Thyroid gland (tissue), 4 donors: ENCODE measurements at regions of chr6 and their contacts with region 1.

Region 1: GRCh38 chr6:41779793-41780545 is at the start of gene FRS3:
- DNase-seq: peak; percentile 98 to 99
- H3K4me3 ChIP-seq: peak within 1 kb of the TSS in 2 of 3 donors; percentile 30 to 66
- H3K27ac ChIP-seq: peak within 1 kb of the TSS; percentile 83 to 86 (median 85)
- H3K4me1 ChIP-seq: peaks cover 20% of the 10 kb centered on the region in 2 donors
- H3K27me3 ChIP-seq: no peaks in the 10 kb centered on the region
- CTCF ChIP-seq: peak; percentile 70 to 99 (median 96)
- POLR2A ChIP-seq: peak in 1 of 2 donors; percentile 59
- total RNA-seq, gene FRS3: 4.0 to 6.7 (median 5.8) TPM

Region 2: DNA sequence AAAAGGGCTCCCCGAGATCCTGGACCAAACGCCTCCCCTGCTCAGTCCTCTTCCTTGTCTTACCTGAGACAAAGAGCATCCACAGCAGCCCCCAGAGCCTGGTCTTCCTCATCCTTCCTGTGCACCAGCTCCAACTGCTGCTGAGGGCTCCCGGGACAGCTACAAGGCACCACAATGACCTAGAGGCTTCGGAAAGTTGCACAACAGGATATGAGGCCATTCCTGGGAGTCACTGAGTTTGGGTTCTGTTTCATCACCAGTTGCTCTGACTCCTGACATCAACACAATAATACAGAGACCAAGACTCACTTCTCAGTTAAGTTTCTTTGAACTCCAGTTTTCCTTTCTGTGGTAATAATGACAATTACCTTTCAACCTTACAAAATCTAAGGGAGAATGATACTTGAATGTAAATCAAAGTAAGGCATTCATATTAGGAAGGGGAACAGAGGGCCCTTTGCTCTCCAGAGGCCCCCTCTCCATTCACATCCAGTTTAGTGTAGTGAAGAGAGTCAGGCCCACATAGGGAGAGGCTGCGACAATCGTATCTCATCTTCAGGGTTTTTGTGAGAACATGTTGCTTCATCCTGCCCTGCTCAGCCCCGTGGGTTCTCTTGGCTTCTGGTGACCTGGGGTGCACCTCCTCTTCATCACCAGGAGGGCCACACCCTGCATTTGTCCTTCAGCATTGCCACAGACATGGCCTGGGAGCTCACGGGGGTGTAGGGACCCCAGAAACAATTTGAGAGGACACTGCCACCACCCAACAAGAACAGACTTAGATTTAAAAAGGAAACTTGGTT is 493.2 kb before region 1 on chr6 and contains the start of gene TREM1:
- intact Hi-C with region 1: no loop called
- DNase-seq: no peak
- H3K4me3 ChIP-seq: no peak within 1 kb of the TSS
- H3K27ac ChIP-seq: peak within 1 kb of the TSS in 2 of 3 donors; percentile 54 to 88
- H3K4me1 ChIP-seq: peaks cover 27 to 56% of the 10 kb centered on the region in 2 donors
- H3K27me3 ChIP-seq: no peaks in the 10 kb centered on the region
- CTCF ChIP-seq: no peak
- POLR2A ChIP-seq: no peak
- total RNA-seq, gene TREM1: 0.63 to 4.5 (median 1.0) TPM in 3 of 4 donors, not detected in the other

Region 3: DNA sequence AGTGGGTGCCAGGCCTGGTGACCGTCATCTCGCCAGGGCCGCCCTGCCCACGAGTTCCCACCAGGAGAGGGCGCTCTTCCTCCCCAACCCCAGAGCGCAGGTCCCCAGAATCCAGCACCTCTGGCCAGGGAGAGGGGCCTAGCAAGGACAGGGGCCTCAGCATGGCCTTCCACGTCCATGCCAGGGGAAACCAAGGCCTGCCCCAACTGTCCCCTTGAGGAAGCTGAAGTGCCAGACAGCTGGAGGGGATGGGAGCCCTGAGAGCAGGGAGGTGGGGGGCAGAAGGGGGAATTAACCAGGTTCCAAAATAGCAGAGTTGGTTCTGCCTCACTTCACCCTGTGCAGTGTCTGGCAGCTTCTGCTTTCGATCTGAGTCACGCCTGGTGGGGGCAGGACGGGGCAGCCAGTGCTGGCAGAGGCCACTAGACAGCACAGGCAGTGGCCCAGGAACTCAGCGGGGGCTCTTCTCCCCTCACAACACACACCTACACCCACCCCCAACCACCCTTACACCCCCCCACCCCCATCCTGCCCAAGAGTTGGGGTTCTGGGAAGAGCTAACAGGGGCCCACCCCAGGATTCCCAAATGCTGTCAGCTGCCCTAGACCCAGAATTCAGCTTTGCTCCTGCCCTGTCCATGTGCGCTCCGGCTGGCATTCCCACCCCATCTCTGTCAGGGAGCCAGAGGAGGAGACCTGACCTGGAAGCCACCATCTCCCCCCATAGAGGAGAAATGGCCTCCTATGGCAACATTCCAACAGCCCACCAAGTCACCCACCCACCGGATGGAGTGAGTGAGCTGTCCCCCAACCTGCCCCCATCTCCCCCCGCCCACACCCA is 73.8 kb before region 1 on chr6:
- intact Hi-C with region 1: loop called (anchors 10 kb)
- DNase-seq: peak; percentile 92 to 94
- H3K4me3 ChIP-seq: no peak overlapping the region
- H3K27ac ChIP-seq: peak overlapping the region; percentile 89 to 95 (median 94)
- H3K4me1 ChIP-seq: peaks cover 43 to 77% of the 10 kb centered on the region in 2 donors
- H3K27me3 ChIP-seq: no peaks in the 10 kb centered on the region
- CTCF ChIP-seq: peak; percentile 45 to 93 (median 86)
- POLR2A ChIP-seq: peak in 1 of 2 donors; percentile 20

Region 4: DNA sequence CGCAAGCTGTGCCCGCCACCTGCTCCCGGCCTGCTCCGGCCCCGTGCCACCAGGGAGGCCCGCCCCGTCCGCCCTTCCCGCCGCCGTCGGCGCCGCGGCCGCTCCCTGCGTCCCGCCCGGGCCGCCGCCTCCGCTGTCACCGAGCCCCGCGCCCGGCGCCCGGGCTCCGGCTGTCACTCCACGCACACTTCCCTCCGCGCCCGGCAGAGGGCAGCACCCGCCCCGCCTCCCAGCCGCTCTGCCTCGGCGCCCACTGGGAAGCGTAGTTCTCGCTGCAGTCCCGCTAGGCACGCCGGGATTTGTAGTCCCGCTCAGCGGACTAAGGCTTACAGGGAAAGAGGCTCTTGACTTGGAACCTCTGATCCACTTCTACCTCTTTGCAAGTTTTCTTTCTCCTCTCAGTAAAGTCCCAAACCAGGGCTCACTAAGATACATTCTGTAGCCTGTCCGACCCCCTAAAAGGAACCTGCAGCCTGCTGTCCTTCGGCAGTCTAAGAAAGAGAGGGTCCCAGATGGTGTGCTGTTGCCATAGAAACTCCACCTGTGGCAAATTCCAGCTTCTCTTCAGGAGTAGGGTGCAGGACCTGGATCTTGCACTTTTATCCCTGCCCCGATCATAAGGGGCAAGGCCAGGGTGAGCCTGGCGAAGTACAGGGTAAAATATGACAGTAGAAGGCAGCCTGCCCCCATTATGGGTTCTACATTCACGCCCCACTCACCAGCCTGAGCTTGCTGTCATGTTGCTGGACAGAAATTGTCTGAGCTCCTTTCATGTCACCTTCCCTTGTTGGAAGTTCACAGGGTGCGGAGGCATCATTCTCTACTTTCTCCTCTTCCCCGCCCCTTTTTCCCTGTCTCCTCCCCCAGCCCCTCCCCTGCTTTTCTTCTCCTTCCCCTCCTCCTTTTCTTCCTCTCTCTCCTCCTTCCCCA is 44.3 kb before region 1 on chr6 and contains the start of gene TFEB:
- intact Hi-C with region 1: loop called (anchors 5 kb)
- DNase-seq: peak; percentile 96 to 97
- H3K4me3 ChIP-seq: peak within 1 kb of the TSS; percentile 80 to 89 (median 88)
- H3K27ac ChIP-seq: peak within 1 kb of the TSS; percentile 91 to 98 (median 94)
- H3K4me1 ChIP-seq: peaks cover 31 to 32% of the 10 kb centered on the region in 2 donors
- H3K27me3 ChIP-seq: no peaks in the 10 kb centered on the region
- CTCF ChIP-seq: peak; percentile 58 to 99 (median 92)
- POLR2A ChIP-seq: peak in 1 of 2 donors; percentile 90
- total RNA-seq, gene TFEB: 23.0 to 39.0 (median 34.9) TPM